H1 (cell line): ENCODE measurements at regions of chr12 and their contacts with region 1.

Region 1: DNA sequence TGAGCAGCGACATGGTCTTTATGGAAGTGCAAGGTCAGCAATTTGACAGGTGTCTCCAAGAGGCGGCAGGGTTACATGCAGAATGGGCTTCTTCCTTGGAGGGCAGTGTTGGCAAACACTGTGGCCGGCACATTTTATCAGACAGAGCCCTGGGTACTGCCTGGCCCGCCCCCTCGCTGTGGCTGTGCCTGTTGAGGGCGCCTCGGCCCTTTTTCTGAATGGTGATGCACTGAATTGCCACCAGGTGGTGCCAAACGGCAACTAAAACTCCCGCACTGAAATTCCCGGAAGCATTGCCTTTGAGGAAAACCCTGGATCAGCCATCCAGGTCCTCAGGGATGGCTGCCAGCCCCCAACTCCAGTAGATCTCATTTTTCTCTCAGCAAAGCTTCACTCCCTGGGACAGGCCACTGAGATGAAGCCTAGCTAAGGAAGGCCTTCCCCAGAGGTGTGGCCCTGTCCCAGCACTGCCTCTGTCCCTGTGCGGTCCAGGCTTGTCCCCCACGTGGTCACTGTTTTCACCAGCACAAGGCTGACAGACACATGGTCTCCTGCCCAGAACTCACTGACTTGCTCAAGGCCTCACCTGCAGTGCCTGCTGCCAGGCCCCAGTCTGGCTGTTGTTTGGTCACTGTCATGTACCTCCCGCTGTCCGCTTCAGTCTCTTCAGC is 73.6 kb downstream of the TESC start:
- DNase-seq: peak; percentile 38 to 90
- H3K4me3 ChIP-seq: no peak overlapping the region
- H3K27ac ChIP-seq: 0 out of 2 replicates have a peak overlapping the region, but pooled peaks have one; percentile 5
- H3K4me1 ChIP-seq: peaks cover 0 to 2% (median 0%) of the 10 kb centered on the region in 4 experiments; a peak in 1 of 7 replicates
- H3K27me3 ChIP-seq: no peaks in the 10 kb centered on the region
- CTCF ChIP-seq: peak; percentile 80 to 97 (median 82)
- EP300 ChIP-seq: no peak
- POLR2A ChIP-seq: no peak
- RAD21 ChIP-seq: peak; percentile 94 to 98

Region 2: DNA sequence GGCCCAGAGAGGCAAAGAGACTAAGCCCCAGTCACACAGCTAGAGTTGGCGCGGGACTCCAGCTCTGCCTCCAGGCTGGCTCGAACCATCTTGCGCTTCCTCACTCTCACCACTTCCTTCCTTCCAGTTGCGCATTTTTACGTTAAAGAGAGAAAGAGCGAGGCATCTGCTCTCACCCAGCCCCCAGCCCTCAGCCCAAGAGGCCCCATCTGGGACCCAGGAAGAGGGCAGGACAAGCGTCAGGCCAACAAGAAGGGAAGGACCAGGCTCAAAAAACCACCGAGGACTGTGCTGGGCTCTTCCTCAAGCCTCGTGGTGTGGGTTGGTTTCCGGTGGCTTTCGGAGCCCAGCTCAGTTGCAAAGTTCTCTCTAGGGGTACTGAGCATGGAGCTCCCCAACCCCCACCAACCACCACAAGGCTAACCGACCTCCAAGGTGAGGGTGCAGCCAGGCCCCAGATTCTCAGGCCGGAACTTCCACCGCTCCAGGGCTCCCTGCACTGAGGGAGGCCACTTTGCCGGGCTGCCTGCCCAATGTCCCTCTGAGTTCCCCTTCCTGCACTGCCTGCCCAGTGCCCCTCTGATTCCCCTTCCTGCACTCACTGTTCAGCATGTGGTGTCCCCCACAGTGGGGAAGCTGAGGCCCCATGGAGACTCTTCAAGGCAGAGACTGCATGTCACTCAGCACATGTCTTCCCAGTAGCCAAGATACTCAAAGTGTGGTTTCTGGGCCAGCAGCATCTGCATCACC is 37.7 kb after region 1 on chr12:
- CTCF ChIA-PET with region 1: interaction called, 14 read pairs
- POLR2A ChIA-PET with region 1: no interaction called
- DNase-seq: no peak
- H3K4me3 ChIP-seq: no peak overlapping the region
- H3K27ac ChIP-seq: no peak overlapping the region
- H3K4me1 ChIP-seq: peaks cover 0 to 19% (median 12%) of the 10 kb centered on the region in 4 experiments; a peak in 6 of 7 replicates
- H3K27me3 ChIP-seq: no peaks in the 10 kb centered on the region
- CTCF ChIP-seq: no peak
- EP300 ChIP-seq: no peak
- POLR2A ChIP-seq: no peak
- RAD21 ChIP-seq: no peak

Region 3: GRCh38 chr12:117111821-117112595 is 86.4 kb after region 1 on chr12:
- CTCF ChIA-PET with region 1: interaction called, 43 read pairs
- POLR2A ChIA-PET with region 1: no interaction called
- DNase-seq: no peak
- H3K4me3 ChIP-seq: no peak overlapping the region
- H3K27ac ChIP-seq: no peak overlapping the region
- H3K4me1 ChIP-seq: peaks cover 0 to 9% (median 7%) of the 10 kb centered on the region in 4 experiments; a peak in 6 of 7 replicates
- H3K27me3 ChIP-seq: peaks cover 0 to 3% (median 0%) of the 10 kb centered on the region in 4 experiments; a peak in 1 of 7 replicates
- CTCF ChIP-seq: no peak
- EP300 ChIP-seq: no peak
- POLR2A ChIP-seq: no peak
- RAD21 ChIP-seq: no peak; a peak in 1 of 4 replicates

Region 4: DNA sequence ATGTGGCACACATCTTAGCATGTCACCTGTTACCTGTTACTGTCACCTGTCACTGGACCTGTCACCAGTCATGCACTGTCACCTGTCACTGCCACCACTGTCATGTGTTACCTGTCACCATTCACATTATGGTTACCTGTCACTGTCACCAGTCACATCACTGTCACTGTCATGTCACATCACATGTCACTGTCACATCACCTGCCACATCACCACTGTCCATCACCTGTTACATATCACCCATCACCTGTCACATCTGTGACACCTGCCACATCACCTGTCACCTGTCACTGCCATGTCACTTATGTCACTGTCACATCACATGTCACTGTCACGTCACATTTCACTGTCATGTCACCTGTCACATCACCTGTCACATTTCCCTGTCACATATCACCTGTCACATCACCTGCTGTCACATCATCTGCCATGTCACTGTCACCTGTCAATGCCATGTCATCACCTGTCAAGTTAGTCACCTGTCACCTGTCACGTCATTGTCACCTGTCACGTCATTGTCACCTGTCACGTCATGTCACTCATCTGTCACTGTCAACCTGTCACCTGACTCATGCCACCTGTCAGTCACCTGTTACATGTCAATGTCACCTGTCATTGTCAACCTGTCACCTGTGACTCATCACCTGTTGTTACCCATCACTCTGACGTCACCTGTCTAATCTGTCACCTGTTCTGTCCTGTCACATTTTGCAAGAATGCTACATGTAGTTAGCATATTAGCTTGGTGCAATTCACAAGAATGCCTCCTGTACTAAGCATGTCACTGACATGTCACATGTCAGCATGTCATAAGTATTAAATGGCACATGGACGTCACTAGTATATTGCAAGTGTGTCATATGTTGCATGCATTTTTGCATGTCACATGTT is 102.6 kb after region 1 on chr12:
- CTCF ChIA-PET with region 1: interaction called, 16 read pairs
- POLR2A ChIA-PET with region 1: no interaction called
- DNase-seq: no peak
- H3K4me3 ChIP-seq: no peak overlapping the region
- H3K27ac ChIP-seq: no peak overlapping the region
- H3K4me1 ChIP-seq: no peaks in the 10 kb centered on the region
- H3K27me3 ChIP-seq: no peaks in the 10 kb centered on the region
- CTCF ChIP-seq: no peak
- EP300 ChIP-seq: no peak
- POLR2A ChIP-seq: no peak
- RAD21 ChIP-seq: no peak

Region 5: GRCh38 chr12:117151195-117152031 is 125.8 kb after region 1 on chr12:
- CTCF ChIA-PET with region 1: interaction called, 28 read pairs
- POLR2A ChIA-PET with region 1: no interaction called
- DNase-seq: peak; percentile 44 to 90
- H3K4me3 ChIP-seq: no peak overlapping the region
- H3K27ac ChIP-seq: no peak overlapping the region
- H3K4me1 ChIP-seq: peaks cover 4% of the 10 kb centered on the region in 4 experiments; a peak in 6 of 7 replicates
- H3K27me3 ChIP-seq: no peaks in the 10 kb centered on the region
- CTCF ChIP-seq: peak; percentile 72 to 81 (median 79)
- EP300 ChIP-seq: no peak
- POLR2A ChIP-seq: no peak
- RAD21 ChIP-seq: peak; percentile 47 to 53